H1 (cell line): ENCODE measurements at regions of chr14 and their contacts with region 1.

Region 1: DNA sequence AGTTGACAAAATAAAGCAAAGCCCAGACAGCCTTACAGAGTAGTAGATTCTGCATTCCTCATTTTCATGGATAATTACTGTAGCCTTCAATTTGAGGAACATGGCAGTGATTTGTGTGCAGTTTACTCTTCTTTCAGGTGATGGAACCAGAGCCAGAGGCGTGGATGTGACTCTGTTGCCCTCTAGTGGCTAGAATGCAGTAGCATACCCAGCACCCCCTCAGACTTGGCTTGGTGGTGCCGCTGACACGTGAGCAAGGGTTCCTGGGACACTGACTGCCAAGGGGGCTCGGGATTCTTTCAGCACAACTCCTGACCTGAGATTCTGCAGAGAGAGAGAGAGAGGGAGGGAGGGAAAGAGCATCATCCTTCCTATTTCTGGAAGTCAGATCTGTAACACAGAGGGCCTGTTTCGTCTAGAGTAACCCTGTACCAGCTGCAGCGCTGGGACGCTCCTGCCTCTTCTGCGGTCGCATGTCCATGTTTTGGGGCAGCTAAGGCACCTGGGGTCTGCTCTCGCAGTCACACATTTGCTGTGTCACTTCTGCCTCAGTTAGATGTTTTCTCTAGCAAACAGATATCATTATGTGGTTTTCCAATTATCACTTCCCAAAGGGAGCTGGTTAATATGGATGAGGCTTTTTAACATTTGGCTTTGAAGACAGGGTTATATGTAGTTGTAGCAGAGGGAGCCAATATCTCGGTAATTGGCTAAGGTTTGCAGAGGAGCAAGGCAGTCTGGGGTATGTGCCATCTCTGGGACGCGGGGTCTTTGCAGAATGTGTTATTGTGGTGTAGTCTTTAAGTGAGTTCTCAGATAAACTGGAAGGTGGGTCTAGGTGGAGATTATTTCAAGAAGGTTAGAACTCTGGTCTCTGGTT is 428.1 kb downstream of the NRXN3 start:
- DNase-seq: peak; percentile 53 to 76
- H3K4me3 ChIP-seq: no peak overlapping the region
- H3K27ac ChIP-seq: no peak overlapping the region
- H3K4me1 ChIP-seq: peaks cover 0 to 3% (median 0%) of the 10 kb centered on the region in 4 experiments; a peak in 1 of 7 replicates
- H3K27me3 ChIP-seq: no peaks in the 10 kb centered on the region
- CTCF ChIP-seq: peak; percentile 95 to 97 (median 95)
- EP300 ChIP-seq: no peak
- POLR2A ChIP-seq: no peak
- RAD21 ChIP-seq: peak; percentile 91 to 95

Region 2: DNA sequence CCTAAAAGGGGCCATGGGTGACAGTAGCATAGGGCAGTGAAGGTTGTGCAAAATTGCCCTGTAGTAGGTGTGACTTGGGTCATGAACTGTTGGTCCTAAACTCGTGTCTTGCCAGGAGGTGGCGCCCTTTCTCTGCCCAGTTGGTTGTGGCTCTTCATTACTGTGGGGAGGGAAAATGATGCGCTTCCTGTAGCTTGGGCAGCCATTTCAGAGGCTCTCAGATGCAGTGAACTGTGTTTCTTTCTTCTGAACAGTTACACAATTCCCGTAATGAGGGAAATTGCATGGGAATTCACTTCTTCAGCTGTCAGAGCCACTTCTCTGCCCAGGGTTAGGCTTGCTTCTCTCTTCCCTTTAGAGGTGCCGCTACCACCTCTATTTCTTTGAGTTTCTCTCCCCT is 576.2 kb before region 1 on chr14:
- CTCF ChIA-PET with region 1: interaction called, 10 read pairs
- POLR2A ChIA-PET with region 1: no interaction called
- DNase-seq: peak; percentile 68 to 95
- H3K4me3 ChIP-seq: no peak overlapping the region
- H3K27ac ChIP-seq: no peak overlapping the region
- H3K4me1 ChIP-seq: no peaks in the 10 kb centered on the region; a peak in 2 of 7 replicates
- H3K27me3 ChIP-seq: no peaks in the 10 kb centered on the region
- CTCF ChIP-seq: peak; percentile 85 to 94 (median 88)
- EP300 ChIP-seq: no peak
- POLR2A ChIP-seq: no peak
- RAD21 ChIP-seq: peak; percentile 98

Region 3: GRCh38 chr14:78448164-78449094 is 149.9 kb before region 1 on chr14:
- CTCF ChIA-PET with region 1: interaction called, 21 read pairs
- POLR2A ChIA-PET with region 1: no interaction called
- DNase-seq: peak; percentile 34 to 93
- H3K4me3 ChIP-seq: no peak overlapping the region
- H3K27ac ChIP-seq: no peak overlapping the region
- H3K4me1 ChIP-seq: no peaks in the 10 kb centered on the region
- H3K27me3 ChIP-seq: no peaks in the 10 kb centered on the region
- CTCF ChIP-seq: peak; percentile 67 to 89 (median 89)
- EP300 ChIP-seq: no peak
- POLR2A ChIP-seq: no peak
- RAD21 ChIP-seq: peak; percentile 91 to 95

Region 4: GRCh38 chr14:78581229-78581628 is 17.1 kb before region 1 on chr14:
- CTCF ChIA-PET with region 1: interaction called, 54 read pairs
- POLR2A ChIA-PET with region 1: no interaction called
- DNase-seq: no peak
- H3K4me3 ChIP-seq: no peak overlapping the region
- H3K27ac ChIP-seq: no peak overlapping the region
- H3K4me1 ChIP-seq: no peaks in the 10 kb centered on the region
- H3K27me3 ChIP-seq: no peaks in the 10 kb centered on the region
- CTCF ChIP-seq: no peak
- EP300 ChIP-seq: no peak
- POLR2A ChIP-seq: no peak
- RAD21 ChIP-seq: no peak

Region 5: DNA sequence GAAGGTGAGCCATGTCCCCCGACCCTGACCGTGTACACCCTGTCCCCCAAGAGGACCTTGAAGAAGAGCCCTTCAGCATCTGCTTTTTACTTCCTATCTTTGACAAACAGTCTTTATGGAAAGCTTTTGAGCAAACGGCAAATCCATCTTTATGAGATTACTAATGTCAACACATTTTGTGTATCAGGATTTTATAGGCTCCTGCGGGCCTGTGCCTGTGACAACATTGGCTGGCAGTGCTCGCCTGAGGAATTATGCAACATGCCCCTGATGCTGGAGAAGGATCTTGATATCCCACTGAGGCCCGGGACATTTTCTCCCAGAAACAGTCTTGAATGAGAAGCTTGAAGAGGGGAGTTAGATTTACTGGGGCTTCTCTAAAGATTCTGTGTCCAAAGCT is 11.6 kb before region 1 on chr14:
- CTCF ChIA-PET with region 1: interaction called, 54 read pairs
- POLR2A ChIA-PET with region 1: no interaction called
- DNase-seq: no peak
- H3K4me3 ChIP-seq: no peak overlapping the region
- H3K27ac ChIP-seq: no peak overlapping the region
- H3K4me1 ChIP-seq: no peaks in the 10 kb centered on the region
- H3K27me3 ChIP-seq: no peaks in the 10 kb centered on the region
- CTCF ChIP-seq: no peak
- EP300 ChIP-seq: no peak
- POLR2A ChIP-seq: no peak
- RAD21 ChIP-seq: no peak

Region 6: GRCh38 chr14:78697341-78697740 is 99.1 kb after region 1 on chr14:
- CTCF ChIA-PET with region 1: interaction called, 84 read pairs
- POLR2A ChIA-PET with region 1: no interaction called
- DNase-seq: no peak
- H3K4me3 ChIP-seq: no peak overlapping the region
- H3K27ac ChIP-seq: no peak overlapping the region
- H3K4me1 ChIP-seq: no peaks in the 10 kb centered on the region
- H3K27me3 ChIP-seq: no peaks in the 10 kb centered on the region
- CTCF ChIP-seq: peak in 2 of 3 experiments; percentile 47 to 69; a peak in 2 of 4 replicates
- EP300 ChIP-seq: no peak
- POLR2A ChIP-seq: no peak
- RAD21 ChIP-seq: peak; percentile 77 to 83